CD4-positive, alpha-beta T cell (primary cell): ENCODE measurements at regions of chr17 and their contacts with region 1.

Region 1: GRCh38 chr17:28951991-28952975 is 965 bp upstream of the PHF12 start:
- DNase-seq: peak; percentile 89 to 100 (median 94)
- ATAC-seq: peak; percentile 71
- H3K4me3 ChIP-seq: peak overlapping the region; percentile 64
- H3K4me3 Mint-ChIP-seq: no peak overlapping the region
- H3K27ac ChIP-seq: peak overlapping the region; percentile 94 to 97
- H3K27ac Mint-ChIP-seq: no peak overlapping the region
- H3K4me1 ChIP-seq: peaks cover 34% of the 10 kb centered on the region
- H3K4me1 Mint-ChIP-seq: peaks cover 15% of the 10 kb centered on the region
- H3K27me3 ChIP-seq: no peaks in the 10 kb centered on the region
- H3K27me3 Mint-ChIP-seq: no peaks in the 10 kb centered on the region
- CTCF ChIP-seq: no peak

Region 2: DNA sequence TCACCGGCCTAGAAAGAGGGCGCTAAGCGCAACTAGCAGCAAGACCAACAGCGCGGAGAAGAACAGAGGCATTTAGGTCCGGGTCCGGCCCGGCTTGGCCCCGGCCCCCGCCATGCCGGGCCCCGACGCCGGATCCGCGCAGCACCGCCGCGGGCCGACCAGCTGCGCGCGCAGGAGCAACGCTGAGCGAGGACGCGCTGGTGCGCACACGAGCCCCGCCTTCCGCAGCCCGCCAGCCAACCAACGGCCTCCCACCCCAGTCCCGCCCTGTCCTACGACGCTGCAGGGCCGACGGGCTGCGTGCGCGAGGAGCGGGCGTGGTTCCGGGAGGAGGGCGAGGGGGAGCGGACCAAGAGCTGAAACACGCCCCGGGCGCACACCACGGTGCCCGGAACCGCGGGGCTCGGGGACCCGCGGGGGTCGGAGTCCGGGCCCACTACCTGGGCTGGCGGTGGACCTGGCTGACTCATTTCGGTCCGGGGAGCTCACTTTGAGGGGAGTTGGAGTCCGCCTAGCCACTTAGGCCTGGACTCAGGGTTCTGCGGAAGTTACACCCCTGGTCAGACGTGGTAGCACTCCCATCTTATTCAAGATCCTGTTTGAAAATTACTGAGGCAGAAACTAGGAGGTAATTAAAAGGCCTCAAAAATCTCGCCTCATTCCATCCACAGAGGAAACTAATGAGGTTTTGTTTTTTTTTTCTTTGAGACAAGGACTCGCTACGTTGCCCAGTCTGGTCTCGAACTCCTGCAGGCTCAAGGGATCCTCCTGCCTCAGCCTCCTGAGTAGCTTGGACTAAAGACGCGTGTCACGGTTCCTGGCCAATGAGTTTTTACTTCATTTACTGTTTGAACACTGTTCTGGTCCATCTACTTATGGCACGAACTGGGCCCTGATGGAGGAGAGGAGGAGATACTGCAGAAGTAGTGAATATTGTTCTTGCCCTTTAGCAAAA is 307.0 kb before region 1 on chr17 and contains the start of gene BLTP2:
- CTCF ChIA-PET with region 1: interaction called, 3 read pairs
- POLR2A ChIA-PET with region 1: interaction called, 15 read pairs
- intact Hi-C with region 1: loop called in 1 of 2 experiments (anchors 5 kb)
- DNase-seq: peak; percentile 90 to 99 (median 96)
- ATAC-seq: peak; percentile 96
- H3K4me3 ChIP-seq: peak within 1 kb of the TSS; percentile 94
- H3K4me3 Mint-ChIP-seq: peak within 1 kb of the TSS; percentile 93
- H3K27ac ChIP-seq: peak within 1 kb of the TSS; percentile 76 to 96
- H3K27ac Mint-ChIP-seq: peak within 1 kb of the TSS; percentile 96
- H3K4me1 ChIP-seq: peaks cover 50% of the 10 kb centered on the region
- H3K4me1 Mint-ChIP-seq: peaks cover 38% of the 10 kb centered on the region
- H3K27me3 ChIP-seq: no peaks in the 10 kb centered on the region
- H3K27me3 Mint-ChIP-seq: no peaks in the 10 kb centered on the region
- CTCF ChIP-seq: no peak
- total RNA-seq, gene BLTP2: 120 to 124 TPM

Region 3: DNA sequence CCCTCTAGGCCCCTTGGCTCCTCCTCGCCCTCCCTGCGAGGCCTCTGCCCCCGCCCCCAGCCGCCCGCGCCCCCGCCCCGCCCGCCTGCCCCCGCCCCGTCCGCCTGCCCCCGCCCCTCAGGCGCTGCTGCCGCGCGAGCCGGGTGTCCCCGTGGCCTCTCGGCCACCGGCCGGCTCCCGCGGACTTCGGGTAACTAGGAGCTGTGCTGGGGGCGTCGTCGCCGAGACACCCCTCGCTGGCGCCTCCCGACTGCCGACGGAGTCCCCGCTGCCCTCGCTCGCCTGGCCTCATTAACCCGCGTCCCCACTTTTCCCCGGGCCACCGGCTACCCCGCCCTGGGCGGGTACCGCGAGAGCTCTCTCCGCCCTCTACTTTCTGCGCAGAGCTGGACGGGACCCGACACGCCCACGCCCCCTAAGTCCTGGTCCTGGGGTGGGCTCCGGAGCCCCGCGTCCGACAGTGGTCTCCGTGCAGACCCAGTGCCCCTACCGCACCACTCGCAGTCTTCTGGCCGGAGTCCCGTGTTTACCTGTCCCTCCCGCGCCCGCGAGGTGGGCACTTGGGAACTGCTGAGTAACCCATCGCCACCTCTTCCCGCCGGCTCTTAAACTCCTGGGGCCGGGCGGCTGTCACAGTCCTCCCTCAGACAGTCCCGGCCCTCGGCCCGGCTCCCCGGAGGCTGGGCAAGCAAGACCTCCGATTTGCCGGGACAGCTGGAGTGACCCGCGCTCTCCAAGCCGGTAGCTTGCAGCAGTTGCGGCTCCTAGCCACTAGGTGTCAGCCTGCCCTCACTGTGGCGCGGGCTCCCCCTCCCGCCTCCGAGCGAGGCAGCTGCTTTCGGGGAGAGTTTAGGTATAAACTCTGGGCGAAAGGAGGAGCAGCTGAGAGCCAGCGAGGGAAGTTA is 225.8 kb before region 1 on chr17 and contains the start of gene TLCD1:
- CTCF ChIA-PET with region 1: interaction called, 35 read pairs
- POLR2A ChIA-PET with region 1: interaction called, 149 read pairs
- intact Hi-C with region 1: loop called (anchors 2 kb)
- DNase-seq: peak; percentile 82 to 94 (median 86)
- ATAC-seq: peak; percentile 43
- H3K4me3 ChIP-seq: peak within 1 kb of the TSS; percentile 75
- H3K4me3 Mint-ChIP-seq: peak within 1 kb of the TSS; percentile 98
- H3K27ac ChIP-seq: peak within 1 kb of the TSS; percentile 99 to 100
- H3K27ac Mint-ChIP-seq: peak within 1 kb of the TSS; percentile 100
- H3K4me1 ChIP-seq: peaks cover 66% of the 10 kb centered on the region
- H3K4me1 Mint-ChIP-seq: peaks cover 64% of the 10 kb centered on the region
- H3K27me3 ChIP-seq: no peaks in the 10 kb centered on the region
- H3K27me3 Mint-ChIP-seq: no peaks in the 10 kb centered on the region
- CTCF ChIP-seq: peak; percentile 99
- total RNA-seq, gene TLCD1: 0.39 to 0.60 TPM

Region 4: GRCh38 chr17:28854457-28855350 is 97.6 kb before region 1 on chr17 and contains the start of gene ERAL1:
- CTCF ChIA-PET with region 1: interaction called, 4 read pairs
- POLR2A ChIA-PET with region 1: interaction called, 5 read pairs
- intact Hi-C with region 1: loop called in 1 of 2 experiments (anchors 5 kb)
- DNase-seq: peak; percentile 69 to 90 (median 76)
- ATAC-seq: peak; percentile 100
- H3K4me3 ChIP-seq: peak within 1 kb of the TSS; percentile 96
- H3K4me3 Mint-ChIP-seq: peak within 1 kb of the TSS; percentile 91
- H3K27ac ChIP-seq: peak within 1 kb of the TSS; percentile 70 to 72
- H3K27ac Mint-ChIP-seq: peak within 1 kb of the TSS; percentile 78
- H3K4me1 ChIP-seq: peaks cover 15% of the 10 kb centered on the region
- H3K4me1 Mint-ChIP-seq: peaks cover 18% of the 10 kb centered on the region
- H3K27me3 ChIP-seq: no peaks in the 10 kb centered on the region
- H3K27me3 Mint-ChIP-seq: no peaks in the 10 kb centered on the region
- CTCF ChIP-seq: no peak
- total RNA-seq, gene ERAL1: 15.6 to 16.8 TPM

Region 5: DNA sequence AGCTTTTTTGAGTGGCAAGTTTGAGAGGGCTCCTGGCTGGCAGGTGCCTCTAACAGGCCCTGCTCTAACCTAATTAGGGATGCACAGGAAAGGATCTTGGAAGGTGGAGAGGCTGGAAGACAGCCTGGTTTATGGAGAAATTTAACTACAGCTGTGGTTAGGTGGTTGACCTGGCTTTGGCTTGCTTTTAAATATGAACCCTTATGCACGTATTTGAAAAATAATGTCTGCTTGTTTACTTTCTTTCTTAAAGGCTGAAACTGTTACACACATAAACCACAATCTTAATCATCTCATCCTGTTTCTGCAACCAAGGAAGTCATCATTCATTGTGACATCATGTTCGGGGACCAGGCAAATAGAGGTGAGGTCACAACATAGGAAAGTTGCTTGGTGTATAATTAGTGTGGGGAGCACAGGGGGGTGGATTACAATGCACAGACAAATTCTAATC is 26.3 kb before region 1 on chr17:
- CTCF ChIA-PET with region 1: interaction called, 13 read pairs
- POLR2A ChIA-PET with region 1: interaction called, 150 read pairs
- intact Hi-C with region 1: loop called (anchors 1 kb)
- DNase-seq: peak in 12 of 14 experiments; percentile 20 to 95 (median 41)
- ATAC-seq: peak; percentile 91
- H3K4me3 ChIP-seq: peak overlapping the region; percentile 22
- H3K4me3 Mint-ChIP-seq: peak overlapping the region; percentile 43
- H3K27ac ChIP-seq: peak overlapping the region; percentile 91 to 92
- H3K27ac Mint-ChIP-seq: peak overlapping the region; percentile 98
- H3K4me1 ChIP-seq: peaks cover 52% of the 10 kb centered on the region
- H3K4me1 Mint-ChIP-seq: peaks cover 66% of the 10 kb centered on the region
- H3K27me3 ChIP-seq: no peaks in the 10 kb centered on the region
- H3K27me3 Mint-ChIP-seq: no peaks in the 10 kb centered on the region
- CTCF ChIP-seq: no peak

Region 6: GRCh38 chr17:29579866-29580771 is 627.8 kb after region 1 on chr17:
- CTCF ChIA-PET with region 1: no interaction called
- POLR2A ChIA-PET with region 1: no interaction called
- intact Hi-C with region 1: loop called in 1 of 2 experiments (anchors 10 kb)
- DNase-seq: peak; percentile 84 to 95 (median 88)
- ATAC-seq: peak; percentile 99
- H3K4me3 ChIP-seq: no peak overlapping the region
- H3K4me3 Mint-ChIP-seq: peak overlapping the region; percentile 69
- H3K27ac ChIP-seq: no peak overlapping the region
- H3K27ac Mint-ChIP-seq: peak overlapping the region; percentile 41
- H3K4me1 ChIP-seq: peaks cover 27% of the 10 kb centered on the region
- H3K4me1 Mint-ChIP-seq: peaks cover 27% of the 10 kb centered on the region
- H3K27me3 ChIP-seq: no peaks in the 10 kb centered on the region
- H3K27me3 Mint-ChIP-seq: no peaks in the 10 kb centered on the region
- CTCF ChIP-seq: peak; percentile 88